Heart left ventricle (tissue), 16 donors: ENCODE measurements at regions of chr4 and their contacts with region 1.

Region 1: DNA sequence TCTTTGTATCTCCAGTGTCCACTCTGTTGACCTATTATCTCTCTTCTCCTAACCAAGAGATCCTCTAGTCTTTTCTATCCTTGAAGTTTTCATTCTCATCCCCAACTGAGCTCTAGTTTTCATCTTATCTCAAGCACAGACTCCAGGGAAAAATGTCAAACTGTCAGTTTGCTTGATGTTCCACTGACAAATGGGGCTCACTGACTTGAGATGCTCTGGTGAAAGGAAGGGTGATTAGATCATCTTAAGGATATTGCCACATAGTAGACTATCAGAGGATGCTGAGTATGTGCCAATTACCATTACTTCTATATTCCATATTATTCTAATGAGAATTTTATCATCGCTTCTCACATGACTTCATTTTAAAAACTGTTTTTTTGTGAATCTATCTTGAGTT is 2008.2 kb downstream of the ARAP2 start:
- DNase-seq: no peak
- ATAC-seq: no peak
- H3K4me3 ChIP-seq: no peak overlapping the region
- H3K27ac ChIP-seq: no peak overlapping the region
- H3K4me1 ChIP-seq: no peaks in the 10 kb centered on the region
- H3K27me3 ChIP-seq: no peaks in the 10 kb centered on the region
- CTCF ChIP-seq: no peak
- POLR2A ChIP-seq: no peak

Region 2: GRCh38 chr4:33537527-33537926 is 698.6 kb before region 1 on chr4:
- intact Hi-C with region 1: loop called in 1 of 10 experiments (anchors 10 kb)
- DNase-seq: no peak
- ATAC-seq: no peak
- H3K4me3 ChIP-seq: no peak overlapping the region
- H3K27ac ChIP-seq: no peak overlapping the region
- H3K4me1 ChIP-seq: no peaks in the 10 kb centered on the region
- H3K27me3 ChIP-seq: no peaks in the 10 kb centered on the region
- CTCF ChIP-seq: no peak
- POLR2A ChIP-seq: no peak

Region 3: GRCh38 chr4:33975995-33976394 is 260.1 kb before region 1 on chr4:
- intact Hi-C with region 1: no loop called
- DNase-seq: no peak
- ATAC-seq: no peak
- H3K4me3 ChIP-seq: no peak overlapping the region
- H3K27ac ChIP-seq: no peak overlapping the region
- H3K4me1 ChIP-seq: no peaks in the 10 kb centered on the region
- H3K27me3 ChIP-seq: no peaks in the 10 kb centered on the region
- CTCF ChIP-seq: no peak
- POLR2A ChIP-seq: no peak